Naive thymus-derived CD4-positive, alpha-beta T cell (primary cell): ENCODE measurements at regions of chr19 and their contacts with region 1.

Region 1: DNA sequence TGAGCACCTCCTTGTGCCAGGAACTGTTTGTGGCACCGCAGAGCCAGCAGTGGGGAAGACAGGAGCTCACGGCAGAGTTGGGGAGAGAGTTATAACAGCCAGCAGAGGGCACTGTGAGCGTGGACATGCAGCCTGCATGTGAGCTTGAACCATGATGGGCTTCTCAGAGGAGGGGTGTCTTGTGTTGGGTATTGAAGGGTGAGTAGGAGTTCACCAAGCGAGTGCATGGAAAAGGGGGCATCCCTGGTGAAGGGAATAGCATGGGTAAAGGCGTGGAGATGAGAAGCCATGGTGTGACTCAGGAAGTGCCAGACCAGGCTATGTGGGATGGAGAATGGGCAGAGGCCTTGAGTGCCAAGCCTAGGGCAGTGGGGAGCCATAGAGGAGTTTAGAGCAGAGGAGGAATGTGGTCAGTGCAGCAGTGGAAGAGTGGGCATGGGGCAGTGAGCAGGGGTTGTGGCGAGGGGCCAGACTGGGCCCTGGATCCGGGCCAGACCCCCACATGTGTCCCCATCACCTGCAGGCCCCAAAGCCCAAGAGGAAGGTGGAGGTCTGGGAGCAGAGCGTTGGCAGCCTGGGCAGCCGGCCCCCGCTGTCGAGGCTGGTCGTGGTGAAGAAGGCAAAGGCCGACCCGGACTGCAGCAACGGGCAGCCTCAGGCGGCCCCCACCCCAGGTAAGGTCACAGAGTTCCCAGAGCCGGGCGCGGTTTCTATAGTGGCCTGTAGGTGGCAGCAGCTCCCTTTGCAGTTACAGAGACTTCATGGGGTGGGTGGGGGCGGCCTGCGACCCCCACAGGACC is 11.8 kb upstream of the SHD start:
- DNase-seq: peak; percentile 33 to 68 (median 48)
- ATAC-seq: peak; percentile 76
- H3K4me3 ChIP-seq: no peak overlapping the region
- H3K4me3 Mint-ChIP-seq: peak overlapping the region in 1 of 10 donors; percentile 19
- H3K27ac ChIP-seq: no peak overlapping the region
- H3K27ac Mint-ChIP-seq: peak overlapping the region in 6 of 9 donors; percentile 0 to 90 (median 60)
- H3K4me1 ChIP-seq: peaks cover 0 to 6% of the 10 kb centered on the region in 2 donors
- H3K4me1 Mint-ChIP-seq: peaks cover 18 to 29% (median 23%) of the 10 kb centered on the region in 7 donors
- H3K27me3 ChIP-seq: no peaks in the 10 kb centered on the region
- H3K27me3 Mint-ChIP-seq: no peaks in the 10 kb centered on the region

Region 2: DNA sequence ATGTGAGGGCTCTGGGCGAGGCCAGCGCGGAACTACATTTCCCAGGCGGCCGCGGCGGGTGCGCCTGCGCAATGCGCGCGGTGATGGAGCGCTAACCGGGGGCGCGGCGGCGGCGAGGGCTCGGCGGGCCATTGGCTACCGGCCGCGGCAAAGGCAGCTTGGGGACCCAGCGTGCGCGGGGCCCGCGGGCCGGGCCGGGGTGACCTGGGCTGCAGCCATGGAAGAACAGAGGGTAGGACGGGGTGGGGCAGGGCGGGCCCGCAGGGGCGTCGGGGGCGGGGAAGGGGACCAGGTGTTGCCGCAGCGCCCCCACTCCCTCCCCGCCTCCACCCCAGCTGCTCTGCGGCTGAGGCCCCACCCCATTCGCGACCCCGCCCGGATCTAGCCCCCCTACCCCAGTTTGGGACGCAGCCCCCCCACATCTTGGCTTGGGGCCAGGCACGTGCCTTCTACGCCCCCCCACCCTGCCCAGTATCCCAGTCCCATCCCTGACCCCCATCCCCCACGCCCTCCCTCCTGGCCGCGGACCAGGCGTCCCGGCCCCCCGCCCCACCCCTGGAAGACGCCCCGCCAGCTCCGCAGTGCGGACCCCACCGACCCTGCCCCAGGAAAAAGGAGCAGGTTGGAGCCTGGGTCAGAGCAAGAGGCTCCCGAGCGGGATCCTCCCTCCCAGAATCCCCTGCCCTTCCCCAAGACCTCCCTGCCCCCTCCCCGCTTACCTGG is 37.4 kb after region 1 on chr19 and contains the start of gene FSD1:
- CTCF ChIA-PET with region 1: interaction called, 11 read pairs
- POLR2A ChIA-PET with region 1: interaction called, 4 read pairs
- intact Hi-C with region 1: loop called (anchors 5 kb)
- DNase-seq: peak; percentile 32 to 89 (median 56)
- ATAC-seq: peak; percentile 65
- H3K4me3 ChIP-seq: peak within 1 kb of the TSS; percentile 43
- H3K4me3 Mint-ChIP-seq: peak within 1 kb of the TSS; percentile 59 to 98 (median 79)
- H3K27ac ChIP-seq: peak within 1 kb of the TSS; percentile 35
- H3K27ac Mint-ChIP-seq: peak within 1 kb of the TSS in 8 of 9 donors; percentile 48 to 96 (median 84)
- H3K4me1 ChIP-seq: peaks cover 4 to 28% of the 10 kb centered on the region in 2 donors
- H3K4me1 Mint-ChIP-seq: peaks cover 8 to 43% (median 33%) of the 10 kb centered on the region in 7 donors
- H3K27me3 ChIP-seq: no peaks in the 10 kb centered on the region
- H3K27me3 Mint-ChIP-seq: no peaks in the 10 kb centered on the region
- total RNA-seq, gene FSD1: 1.8 to 18.9 (median 3.4) TPM

Region 3: GRCh38 chr19:4319067-4319718 is 51.9 kb after region 1 on chr19:
- CTCF ChIA-PET with region 1: no interaction called
- POLR2A ChIA-PET with region 1: no interaction called
- intact Hi-C with region 1: no loop called
- DNase-seq: no peak
- ATAC-seq: no peak
- H3K4me3 ChIP-seq: no peak overlapping the region
- H3K4me3 Mint-ChIP-seq: peak overlapping the region in 1 of 10 donors; percentile 38
- H3K27ac ChIP-seq: no peak overlapping the region
- H3K27ac Mint-ChIP-seq: peak overlapping the region in 6 of 9 donors; percentile 8 to 76 (median 48)
- H3K4me1 ChIP-seq: no peaks in the 10 kb centered on the region
- H3K4me1 Mint-ChIP-seq: peaks cover 0 to 12% (median 0%) of the 10 kb centered on the region in 7 donors
- H3K27me3 ChIP-seq: no peaks in the 10 kb centered on the region
- H3K27me3 Mint-ChIP-seq: no peaks in the 10 kb centered on the region

Region 4: DNA sequence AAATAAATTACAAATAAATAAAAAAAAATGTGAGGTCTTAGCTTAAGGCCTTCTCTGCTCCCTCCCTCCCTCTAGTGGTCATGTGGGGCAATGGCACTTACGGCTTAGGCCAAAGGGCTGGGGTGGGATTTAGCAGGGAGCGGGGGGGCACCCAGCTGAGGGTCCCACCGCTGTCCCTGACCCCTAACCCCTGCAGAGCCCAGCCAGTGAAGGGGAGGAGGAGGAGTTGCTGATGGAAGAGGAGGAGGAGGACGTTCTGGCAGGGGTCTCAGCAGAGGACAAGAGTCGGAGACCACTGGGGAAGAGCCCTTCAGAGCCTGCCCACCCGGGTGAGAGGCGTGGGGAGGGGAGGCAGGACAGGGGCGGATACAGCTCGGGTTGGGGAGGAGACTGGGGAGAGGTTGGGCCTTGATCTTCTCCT is 85.4 kb after region 1 on chr19:
- CTCF ChIA-PET with region 1: interaction called, 51 read pairs
- POLR2A ChIA-PET with region 1: interaction called, 3 read pairs
- intact Hi-C with region 1: loop called (anchors 1 kb)
- DNase-seq: peak in 7 of 9 donors; percentile 31 to 72 (median 60)
- ATAC-seq: peak; percentile 87
- H3K4me3 ChIP-seq: no peak overlapping the region
- H3K4me3 Mint-ChIP-seq: no peak overlapping the region
- H3K27ac ChIP-seq: no peak overlapping the region
- H3K27ac Mint-ChIP-seq: peak overlapping the region in 3 of 9 donors; percentile 51 to 78 (median 76)
- H3K4me1 ChIP-seq: no peaks in the 10 kb centered on the region
- H3K4me1 Mint-ChIP-seq: peaks cover 0 to 9% (median 0%) of the 10 kb centered on the region in 7 donors
- H3K27me3 ChIP-seq: no peaks in the 10 kb centered on the region
- H3K27me3 Mint-ChIP-seq: no peaks in the 10 kb centered on the region

Region 5: DNA sequence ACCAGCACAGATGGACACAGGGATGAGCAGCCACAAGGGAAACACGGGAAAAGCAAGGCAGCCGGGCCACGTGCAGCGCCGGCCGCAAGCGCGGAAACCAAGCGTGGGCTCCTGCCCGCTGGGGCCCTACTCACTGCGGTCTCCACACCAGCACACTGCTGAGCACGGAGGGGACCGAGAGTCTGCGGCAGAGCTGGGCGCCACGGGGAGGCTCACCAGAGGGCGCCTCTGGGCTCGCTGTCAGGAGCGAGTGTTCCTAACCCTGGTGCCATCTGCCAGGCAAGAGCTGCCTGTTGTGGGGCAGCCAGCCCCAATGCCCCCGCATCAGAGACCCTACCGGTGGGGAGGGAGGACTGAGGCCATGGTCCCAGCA is 102.6 kb after region 1 on chr19:
- CTCF ChIA-PET with region 1: interaction called, 4 read pairs
- POLR2A ChIA-PET with region 1: no interaction called
- intact Hi-C with region 1: loop called in 1 of 2 experiments (anchors 1 kb)
- DNase-seq: peak; percentile 55 to 80 (median 67)
- ATAC-seq: peak; percentile 80
- H3K4me3 ChIP-seq: peak overlapping the region; percentile 76
- H3K4me3 Mint-ChIP-seq: peak overlapping the region; percentile 87 to 97 (median 94)
- H3K27ac ChIP-seq: peak overlapping the region; percentile 68
- H3K27ac Mint-ChIP-seq: peak overlapping the region; percentile 81 to 96 (median 94)
- H3K4me1 ChIP-seq: peaks cover 21 to 32% of the 10 kb centered on the region in 2 donors
- H3K4me1 Mint-ChIP-seq: peaks cover 22 to 57% (median 42%) of the 10 kb centered on the region in 7 donors
- H3K27me3 ChIP-seq: no peaks in the 10 kb centered on the region
- H3K27me3 Mint-ChIP-seq: no peaks in the 10 kb centered on the region

Region 6: DNA sequence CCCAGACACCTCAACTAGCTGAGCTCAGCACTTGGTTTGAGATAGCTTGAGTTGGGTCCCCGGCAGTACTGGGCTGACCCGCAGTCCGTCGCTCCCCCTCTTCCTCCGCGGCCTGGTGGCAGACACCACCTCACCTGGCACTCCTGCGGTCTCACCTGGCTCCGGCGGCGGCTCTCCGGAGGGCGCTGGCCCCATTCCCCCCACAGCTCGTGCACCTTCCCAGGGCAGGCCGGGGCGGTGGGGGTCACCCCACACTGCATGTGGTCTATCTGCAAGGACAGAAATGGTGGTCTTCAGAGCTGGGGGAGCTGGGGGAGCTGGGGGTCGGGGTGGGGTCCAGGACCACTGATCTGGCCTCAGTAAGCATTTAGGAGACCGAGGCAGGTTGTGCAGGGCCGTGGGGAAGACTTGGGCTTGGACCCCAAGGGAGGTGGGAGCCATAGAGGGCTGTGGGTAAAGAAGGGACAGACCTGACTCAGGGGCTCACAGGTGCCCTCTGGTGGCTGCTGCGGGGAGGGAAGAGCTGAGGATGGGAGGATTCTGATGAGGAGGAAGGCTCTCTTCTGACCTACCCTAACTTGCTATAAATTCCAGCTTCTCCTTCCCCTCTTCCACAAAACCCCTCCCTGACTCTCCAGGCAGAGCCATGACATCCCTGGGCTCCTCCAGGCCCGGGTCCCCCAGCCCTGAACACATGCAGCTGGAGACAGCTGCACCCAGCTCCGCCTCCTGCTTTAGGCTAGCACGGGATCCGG is 257.7 kb after region 1 on chr19:
- CTCF ChIA-PET with region 1: no interaction called
- POLR2A ChIA-PET with region 1: no interaction called
- intact Hi-C with region 1: loop called in 1 of 2 experiments (anchors 1 kb)
- DNase-seq: peak; percentile 19 to 70 (median 59)
- ATAC-seq: peak; percentile 77
- H3K4me3 ChIP-seq: no peak overlapping the region
- H3K4me3 Mint-ChIP-seq: no peak overlapping the region
- H3K27ac ChIP-seq: no peak overlapping the region
- H3K27ac Mint-ChIP-seq: no peak overlapping the region
- H3K4me1 ChIP-seq: no peaks in the 10 kb centered on the region
- H3K4me1 Mint-ChIP-seq: no peaks in the 10 kb centered on the region
- H3K27me3 ChIP-seq: no peaks in the 10 kb centered on the region
- H3K27me3 Mint-ChIP-seq: peaks cover 0 to 4% (median 0%) of the 10 kb centered on the region in 5 donors